ENCODE measurements at regions of chr19 and their contacts with region 1.

Region 1: DNA sequence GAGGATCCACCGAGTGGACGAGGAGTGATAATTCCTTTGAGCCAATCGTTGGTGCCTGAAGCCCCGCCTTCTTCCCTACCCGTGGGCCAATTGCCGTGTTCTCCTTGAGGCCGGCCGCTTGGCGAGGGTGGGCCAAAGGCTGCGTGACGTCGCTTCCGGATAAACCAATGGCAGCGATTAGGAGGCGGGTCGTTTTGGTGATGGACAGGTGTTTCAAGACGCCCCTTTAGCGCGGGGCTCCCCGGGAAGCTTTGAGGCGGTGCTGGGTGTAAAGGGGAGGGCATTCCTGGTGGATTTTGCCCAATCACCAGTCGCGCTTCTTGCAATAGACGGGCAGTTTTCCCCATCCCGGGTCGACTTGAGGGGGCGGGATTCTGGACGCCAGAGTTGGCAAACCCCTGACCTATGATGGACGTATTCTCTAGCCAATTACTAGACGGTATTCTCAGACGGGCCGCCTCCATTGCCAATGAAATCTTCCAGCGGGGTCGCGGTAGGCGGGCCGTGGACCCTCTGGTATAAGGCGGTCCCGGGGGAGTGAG is 310 bp upstream of the PRMT1 start:
- DNase-seq: peak; percentile 99
- ATAC-seq: peak; percentile 72
- H3K4me3 ChIP-seq: peak overlapping the region; percentile 100
- H3K27ac ChIP-seq: peak overlapping the region; percentile 99
- H3K4me1 ChIP-seq: peaks cover 36% of the 10 kb centered on the region
- H3K27me3 ChIP-seq: no peaks in the 10 kb centered on the region
- CTCF ChIP-seq: no peak
- EP300 ChIP-seq: no peak
- POLR2A ChIP-seq: no peak
- RAD21 ChIP-seq: no peak

Region 2: DNA sequence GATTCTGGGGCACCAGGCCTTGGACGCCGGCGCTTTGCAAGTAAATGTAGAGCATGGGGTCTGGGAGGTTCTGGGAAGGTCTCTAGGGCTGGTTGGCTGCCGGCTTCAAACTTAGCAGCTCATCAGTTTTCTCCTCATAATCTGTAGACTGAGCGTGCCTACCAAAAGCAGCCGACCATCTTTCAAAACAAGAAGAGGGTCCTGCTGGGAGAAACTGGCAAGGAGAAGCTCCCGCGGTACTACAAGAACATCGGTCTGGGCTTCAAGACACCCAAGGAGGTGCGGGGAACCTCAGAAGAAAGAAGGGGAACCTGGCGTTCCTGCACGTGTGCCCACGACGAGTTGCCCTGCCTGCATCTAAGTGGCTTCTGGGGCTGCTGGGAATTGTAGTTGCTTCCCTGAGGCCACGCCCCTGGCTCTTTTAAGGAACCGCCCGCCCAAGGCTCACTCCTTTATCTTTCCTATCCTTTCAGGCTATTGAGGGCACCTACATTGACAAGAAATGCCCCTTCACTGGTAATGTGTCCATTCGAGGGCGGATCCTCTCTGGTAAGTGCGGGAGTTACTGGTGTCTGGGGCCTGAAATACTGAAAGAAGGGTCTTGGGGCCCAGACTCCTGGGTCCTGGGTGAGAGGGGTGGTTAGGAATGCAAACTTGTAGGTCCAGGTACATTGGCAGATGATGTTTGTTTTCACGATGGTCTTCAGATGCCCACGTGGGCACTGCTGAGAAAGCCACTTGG is 179.5 kb before region 1 on chr19:
- CTCF ChIA-PET with region 1: interaction called, 8 read pairs
- POLR2A ChIA-PET with region 1: interaction called, 9 read pairs
- RAD21 ChIA-PET with region 1: interaction called, 4 read pairs
- SMC1A ChIA-PET with region 1: interaction called, 3 read pairs
- in situ Hi-C with region 1: no loop called
- intact Hi-C with region 1: loop called (anchors 2 kb)
- DNase-seq: no peak
- ATAC-seq: peak; percentile 41
- H3K4me3 ChIP-seq: peak overlapping the region; percentile 79
- H3K27ac ChIP-seq: peak overlapping the region; percentile 85
- H3K4me1 ChIP-seq: peaks cover 35% of the 10 kb centered on the region
- H3K27me3 ChIP-seq: no peaks in the 10 kb centered on the region
- CTCF ChIP-seq: no peak
- EP300 ChIP-seq: no peak
- POLR2A ChIP-seq: peak; percentile 74
- RAD21 ChIP-seq: no peak

Region 3: GRCh38 chr19:49570138-49570856 is 106.5 kb before region 1 on chr19:
- CTCF ChIA-PET with region 1: interaction called, 96 read pairs
- POLR2A ChIA-PET with region 1: interaction called, 6 read pairs
- RAD21 ChIA-PET with region 1: interaction called, 9 read pairs
- SMC1A ChIA-PET with region 1: interaction called, 4 read pairs
- in situ Hi-C with region 1: no loop called
- intact Hi-C with region 1: no loop called
- DNase-seq: no peak
- ATAC-seq: peak; percentile 96
- H3K4me3 ChIP-seq: no peak overlapping the region
- H3K27ac ChIP-seq: no peak overlapping the region
- H3K4me1 ChIP-seq: peaks cover 11% of the 10 kb centered on the region
- H3K27me3 ChIP-seq: no peaks in the 10 kb centered on the region
- CTCF ChIP-seq: peak; percentile 94 to 100 (median 99); a peak in 5 of 6 replicates
- EP300 ChIP-seq: no peak
- POLR2A ChIP-seq: no peak
- RAD21 ChIP-seq: peak; percentile 97

Region 4: DNA sequence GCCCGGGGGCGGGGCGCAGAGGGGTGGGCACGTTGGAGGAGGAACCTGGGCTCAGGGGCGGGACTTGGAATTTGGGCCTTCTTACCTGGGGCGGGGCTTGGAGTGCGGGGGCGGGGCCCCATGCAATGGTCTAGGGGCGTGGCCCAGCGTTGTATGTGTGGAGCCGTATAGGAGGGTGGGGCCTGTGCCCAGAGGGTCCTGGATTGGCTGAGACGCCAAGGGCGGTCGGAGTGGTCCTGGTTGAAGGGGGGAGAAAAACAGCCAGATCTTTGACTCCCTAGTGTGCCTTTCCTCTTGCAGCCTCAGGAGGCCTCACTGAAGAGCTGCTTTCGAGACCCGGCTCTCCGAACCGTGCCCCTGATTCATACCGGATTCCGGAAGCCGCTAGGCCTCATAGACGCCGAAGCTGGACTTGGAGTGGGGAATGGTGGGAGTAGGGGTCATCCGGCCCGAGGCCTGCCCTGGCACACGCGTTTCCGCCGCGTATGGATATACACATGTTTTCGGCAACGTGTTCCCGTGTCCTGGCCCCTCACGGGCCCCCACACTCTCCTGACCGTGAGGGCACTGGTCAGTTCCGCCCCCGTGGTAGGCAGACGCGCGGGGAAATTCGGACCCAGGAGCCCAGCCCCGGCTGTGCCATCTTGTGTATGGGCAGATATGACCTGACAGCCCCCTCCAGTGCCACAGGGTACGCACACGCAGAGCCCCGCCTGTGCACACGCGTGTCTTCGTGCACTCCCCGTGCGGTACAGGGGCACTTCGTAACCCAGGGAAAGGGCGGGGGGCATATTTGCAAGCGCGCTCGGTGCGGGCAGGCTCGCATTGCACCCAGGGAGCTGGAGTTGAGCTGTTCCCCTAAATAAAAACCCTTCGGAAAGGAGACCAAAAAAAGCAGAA is 86.4 kb before region 1 on chr19:
- CTCF ChIA-PET with region 1: interaction called, 5 read pairs
- POLR2A ChIA-PET with region 1: interaction called, 37 read pairs
- RAD21 ChIA-PET with region 1: interaction called, 8 read pairs
- SMC1A ChIA-PET with region 1: interaction called, 6 read pairs
- in situ Hi-C with region 1: no loop called
- intact Hi-C with region 1: loop called (anchors 2 kb)
- DNase-seq: peak; percentile 91
- ATAC-seq: peak; percentile 88
- H3K4me3 ChIP-seq: peak overlapping the region; percentile 85
- H3K27ac ChIP-seq: peak overlapping the region; percentile 90
- H3K4me1 ChIP-seq: peaks cover 15% of the 10 kb centered on the region
- H3K27me3 ChIP-seq: no peaks in the 10 kb centered on the region
- CTCF ChIP-seq: 0 out of 6 replicates have a peak, but pooled peaks of 1 of the 3 experiments have one; percentile 2
- EP300 ChIP-seq: no peak
- POLR2A ChIP-seq: peak; percentile 89
- RAD21 ChIP-seq: no peak

Region 5: DNA sequence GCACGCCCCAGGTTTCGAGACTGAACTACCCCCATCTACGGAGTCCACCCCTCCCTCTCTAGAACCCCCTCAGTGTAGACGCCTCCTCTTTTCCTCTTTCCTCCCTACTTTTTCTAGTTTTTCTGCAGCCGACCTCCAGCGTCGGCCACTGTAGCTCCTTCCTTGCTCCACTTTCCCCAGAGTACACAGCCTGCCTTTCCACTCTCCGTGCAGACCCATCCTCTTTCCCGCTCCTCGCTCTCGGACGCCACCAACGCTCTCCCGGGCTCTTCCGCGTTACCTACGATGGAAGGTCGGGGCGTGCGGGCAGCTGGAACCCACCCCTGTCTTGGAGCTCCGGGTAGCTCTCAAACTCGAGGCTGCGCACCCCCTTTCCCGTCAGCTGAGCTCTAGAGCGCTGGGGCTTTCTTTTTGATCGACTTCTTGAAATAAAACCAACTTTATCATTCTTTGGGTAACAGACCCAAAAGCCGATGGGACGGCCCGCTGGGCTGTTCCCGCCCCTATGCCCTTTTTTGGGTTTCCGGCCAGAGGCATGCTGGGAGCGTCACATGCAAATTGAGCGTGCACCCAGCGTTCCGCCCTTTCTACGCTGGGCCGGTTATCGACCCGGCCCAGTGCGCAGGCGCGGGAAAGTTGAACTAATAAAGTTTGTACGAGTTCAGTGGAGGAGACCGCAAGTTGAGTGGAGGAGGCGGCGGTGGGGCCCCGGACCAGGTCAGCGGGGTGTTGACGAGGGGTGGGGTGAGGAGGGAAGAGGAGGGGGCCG is 11.2 kb before region 1 on chr19 and contains the starts of genes BCL2L12 and IRF3:
- CTCF ChIA-PET with region 1: interaction called, 80 read pairs
- POLR2A ChIA-PET with region 1: interaction called, 126 read pairs
- RAD21 ChIA-PET with region 1: interaction called, 34 read pairs
- SMC1A ChIA-PET with region 1: interaction called, 8 read pairs
- in situ Hi-C with region 1: no loop called
- intact Hi-C with region 1: no loop called
- DNase-seq: peak; percentile 84
- ATAC-seq: peak; percentile 92
- H3K4me3 ChIP-seq: peak within 1 kb of the TSS; percentile 99
- H3K27ac ChIP-seq: peak within 1 kb of the TSS; percentile 91
- H3K4me1 ChIP-seq: peaks cover 14% of the 10 kb centered on the region
- H3K27me3 ChIP-seq: no peaks in the 10 kb centered on the region
- CTCF ChIP-seq: no peak; a peak in 1 of 6 replicates
- EP300 ChIP-seq: no peak
- POLR2A ChIP-seq: peak; percentile 74
- RAD21 ChIP-seq: no peak
- polyA plus RNA-seq, gene BCL2L12: 1.8 to 7.9 TPM
- polyA plus RNA-seq, gene IRF3: 5.5 to 17.2 TPM

Region 6: DNA sequence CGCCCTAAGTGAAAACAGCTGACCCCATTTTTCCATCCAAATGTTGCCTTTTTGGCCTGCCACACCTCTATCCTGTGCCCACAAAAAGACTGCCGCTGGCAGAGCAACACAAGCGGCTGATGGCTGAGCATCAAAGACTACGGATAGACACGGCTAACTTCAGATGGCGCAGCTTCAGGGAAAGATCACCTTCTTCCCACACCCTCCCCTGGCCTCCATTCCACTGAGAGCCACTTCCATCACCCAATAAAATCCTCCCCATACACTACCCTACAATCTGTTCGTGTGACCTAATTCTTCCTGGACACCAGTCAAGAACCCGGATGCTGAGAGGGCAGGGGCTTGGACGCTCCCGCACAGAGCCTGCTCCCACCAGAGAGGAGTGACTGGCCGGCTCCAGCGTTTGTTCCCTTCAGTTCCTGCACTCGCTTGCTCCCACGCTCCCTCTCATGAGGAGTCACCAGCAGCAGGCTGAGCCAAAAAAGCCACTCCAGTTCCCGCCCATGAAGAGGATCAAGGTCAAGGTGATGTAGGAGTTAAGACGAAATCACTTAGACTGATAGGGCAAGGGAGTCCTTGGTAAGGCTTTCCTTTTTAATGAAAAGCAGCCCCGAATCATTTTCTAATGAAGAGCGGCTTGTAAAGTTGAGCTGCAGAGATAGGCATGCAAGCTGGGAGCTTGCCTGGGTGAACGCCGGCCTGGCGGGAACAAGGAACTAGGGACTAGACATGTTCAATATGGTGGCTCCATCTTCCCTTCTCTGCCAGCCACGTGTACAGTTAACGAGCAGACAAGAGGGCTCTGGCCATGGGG is 50.7 kb after region 1 on chr19:
- CTCF ChIA-PET with region 1: no interaction called
- POLR2A ChIA-PET with region 1: no interaction called
- RAD21 ChIA-PET with region 1: no interaction called
- SMC1A ChIA-PET with region 1: no interaction called
- in situ Hi-C with region 1: no loop called
- intact Hi-C with region 1: no loop called
- DNase-seq: no peak
- ATAC-seq: no peak
- H3K4me3 ChIP-seq: no peak overlapping the region
- H3K27ac ChIP-seq: no peak overlapping the region
- H3K4me1 ChIP-seq: no peaks in the 10 kb centered on the region
- H3K27me3 ChIP-seq: no peaks in the 10 kb centered on the region
- CTCF ChIP-seq: no peak
- EP300 ChIP-seq: no peak
- POLR2A ChIP-seq: no peak
- RAD21 ChIP-seq: no peak

Measured in GM12878 (cell line).